Left colon (tissue), 2 donors: ENCODE measurements at regions of chr19 and their contacts with region 1.

Region 1: DNA sequence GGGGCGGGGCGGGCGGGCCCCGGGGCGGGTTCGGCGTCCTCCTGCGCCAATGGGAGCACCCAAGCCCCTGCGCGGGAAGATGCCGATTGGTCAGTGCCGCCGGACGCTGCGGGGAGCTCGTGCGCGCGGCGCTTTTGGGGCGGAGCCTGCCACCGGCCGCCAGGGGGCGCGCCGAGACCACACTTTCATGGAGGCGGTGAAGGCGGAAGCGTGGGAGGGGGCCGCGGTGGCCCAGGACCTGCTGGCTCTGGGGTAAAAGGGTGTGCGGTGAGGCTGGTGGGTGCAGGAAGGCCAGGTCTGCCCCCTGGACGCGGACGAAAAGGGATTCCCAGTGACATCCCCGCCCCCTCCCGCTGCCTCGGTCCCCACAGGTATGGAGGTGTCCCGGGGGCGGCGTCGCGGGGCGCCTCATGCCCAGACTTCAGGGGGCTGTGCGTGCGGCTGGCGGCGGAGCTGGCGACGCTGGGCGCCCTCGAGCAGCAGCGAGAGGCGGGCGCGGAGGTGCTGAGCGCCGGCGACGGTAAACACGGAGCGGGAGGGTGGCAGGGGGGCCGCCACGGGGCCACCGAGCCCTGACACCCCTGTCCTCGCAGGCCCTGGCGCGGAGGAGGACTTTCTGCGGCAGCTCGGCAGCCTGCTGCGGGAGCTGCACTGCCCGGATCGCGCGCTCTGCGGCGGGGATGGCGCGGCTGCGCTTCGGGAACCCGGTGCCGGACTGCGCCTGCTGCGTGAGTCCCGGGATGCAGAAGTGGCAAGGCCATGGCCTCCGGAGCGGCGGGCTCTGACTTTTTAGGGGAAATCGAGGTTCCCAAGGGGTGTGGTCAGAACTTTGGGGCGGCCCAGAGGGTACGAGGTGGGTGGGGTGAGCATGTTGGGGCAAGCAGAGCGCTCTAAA is at the start of gene FAM98C:
- DNase-seq: peak; percentile 96
- ATAC-seq: peak; percentile 95
- total RNA-seq, gene FAM98C: 33.2 to 37.4 TPM

Region 2: DNA sequence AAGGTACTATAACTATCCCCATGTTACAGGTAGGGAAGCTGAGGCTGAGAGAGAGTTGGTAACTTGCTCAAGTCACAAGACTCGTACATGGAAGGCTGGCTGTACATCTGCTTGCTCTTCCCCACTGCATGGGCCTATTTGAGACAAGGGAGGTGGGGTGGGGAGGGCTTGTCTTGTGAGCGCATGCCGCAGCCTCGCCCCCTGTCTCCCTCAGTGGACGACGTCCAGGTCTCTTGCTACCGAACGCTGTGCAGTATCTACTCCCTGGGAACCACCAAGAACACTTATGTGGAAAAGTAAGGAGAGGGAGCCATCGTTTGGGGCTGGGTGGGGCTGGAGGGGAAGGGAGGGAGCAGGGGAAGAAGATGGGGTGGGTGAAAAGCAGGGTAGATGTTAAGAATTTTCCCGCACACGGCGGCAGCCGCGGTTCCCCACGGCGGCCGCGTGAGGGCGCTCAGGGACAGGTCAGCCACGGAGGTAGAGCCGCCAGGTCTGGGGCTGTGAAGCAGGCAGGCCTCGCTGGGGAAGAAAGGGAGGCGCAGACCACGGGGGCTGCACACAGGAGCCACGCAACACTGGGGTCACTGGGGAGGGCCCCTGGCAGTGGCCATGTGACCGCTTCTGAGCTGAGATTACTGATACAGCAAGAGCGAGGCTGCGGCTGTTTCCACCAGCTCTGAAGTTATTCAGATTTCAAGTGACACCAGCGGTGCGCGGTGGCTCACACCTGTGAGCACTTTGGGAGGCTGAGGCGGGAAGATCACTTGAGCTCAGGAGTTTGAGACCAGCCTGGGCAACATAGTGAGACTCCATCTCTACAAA is 111.8 kb after region 1 on chr19:
- intact Hi-C with region 1: no loop called
- DNase-seq: peak; percentile 37 to 75
- ATAC-seq: peak; percentile 91

Region 3: GRCh38 chr19:38634757-38635482 is 231.7 kb after region 1 on chr19:
- intact Hi-C with region 1: loop called in 1 of 2 experiments (anchors 5 kb)
- DNase-seq: peak in 1 of 2 donors; percentile 82
- ATAC-seq: peak; percentile 7